GM12878 (cell line): ENCODE measurements at regions of chr6 and their contacts with region 1.

Region 1: GRCh38 chr6:30013291-30013922 is 47.7 kb upstream of the POLR1H start:
- DNase-seq: no peak
- ATAC-seq: peak; percentile 70
- H3K4me3 ChIP-seq: no peak overlapping the region
- H3K27ac ChIP-seq: no peak overlapping the region
- H3K4me1 ChIP-seq: no peaks in the 10 kb centered on the region
- H3K27me3 ChIP-seq: no peaks in the 10 kb centered on the region
- CTCF ChIP-seq: peak; percentile 68 to 81 (median 76)
- EP300 ChIP-seq: no peak
- POLR2A ChIP-seq: no peak
- RAD21 ChIP-seq: peak; percentile 81

Region 2: GRCh38 chr6:30025186-30025585 is 11.8 kb after region 1 on chr6:
- CTCF ChIA-PET with region 1: interaction called, 12 read pairs
- POLR2A ChIA-PET with region 1: interaction called, 7 read pairs
- RAD21 ChIA-PET with region 1: no interaction called
- SMC1A ChIA-PET with region 1: interaction called, 3 read pairs
- in situ Hi-C with region 1: no loop called
- intact Hi-C with region 1: no loop called
- DNase-seq: no peak
- ATAC-seq: no peak
- H3K4me3 ChIP-seq: no peak overlapping the region
- H3K27ac ChIP-seq: no peak overlapping the region
- H3K4me1 ChIP-seq: no peaks in the 10 kb centered on the region
- H3K27me3 ChIP-seq: no peaks in the 10 kb centered on the region
- CTCF ChIP-seq: no peak
- EP300 ChIP-seq: no peak
- POLR2A ChIP-seq: no peak
- RAD21 ChIP-seq: no peak

Region 3: DNA sequence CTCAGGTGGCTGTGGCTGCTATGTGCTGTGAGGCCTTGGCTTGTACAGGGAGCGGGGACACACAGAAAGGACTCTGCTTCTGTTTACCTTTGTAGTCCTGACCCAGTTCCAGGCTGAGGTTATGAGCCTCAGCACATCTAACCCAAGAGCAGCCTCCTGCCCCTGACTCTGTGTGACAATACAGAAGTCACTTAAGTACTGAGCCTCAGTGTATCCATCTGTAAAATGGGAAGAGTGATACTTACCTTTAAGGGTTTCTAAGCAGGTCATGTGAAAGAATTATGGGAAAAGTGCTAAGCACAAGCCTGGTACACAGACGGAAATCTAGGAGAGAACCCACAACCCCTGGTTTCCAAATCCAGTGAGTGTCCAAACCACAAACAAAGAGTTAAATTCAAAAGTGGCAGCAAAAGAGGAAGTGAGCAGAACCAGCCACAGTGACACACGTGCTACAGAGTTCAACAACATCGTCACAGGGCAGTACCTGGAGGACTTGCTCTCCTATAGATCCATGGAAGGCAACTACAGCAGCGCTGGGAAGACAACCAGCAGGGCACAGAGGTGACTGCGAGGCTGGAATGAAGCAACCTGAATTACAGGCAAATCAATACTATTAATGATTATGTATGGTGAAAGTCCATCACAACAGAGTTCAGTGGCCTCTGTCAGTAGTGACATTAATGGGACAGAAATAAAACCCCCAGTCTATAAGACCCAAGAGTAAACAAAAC is 187.3 kb after region 1 on chr6:
- CTCF ChIA-PET with region 1: no interaction called
- POLR2A ChIA-PET with region 1: no interaction called
- RAD21 ChIA-PET with region 1: no interaction called
- SMC1A ChIA-PET with region 1: no interaction called
- in situ Hi-C with region 1: no loop called
- intact Hi-C with region 1: no loop called
- DNase-seq: peak; percentile 37
- ATAC-seq: peak; percentile 93
- H3K4me3 ChIP-seq: no peak overlapping the region
- H3K27ac ChIP-seq: peak overlapping the region; percentile 38
- H3K4me1 ChIP-seq: peaks cover 25% of the 10 kb centered on the region
- H3K27me3 ChIP-seq: no peaks in the 10 kb centered on the region
- CTCF ChIP-seq: no peak
- EP300 ChIP-seq: peak; percentile 54 to 65; a peak in 1 of 4 replicates
- POLR2A ChIP-seq: no peak
- RAD21 ChIP-seq: no peak